Activated CD4-positive, alpha-beta T cell treated with anti-CD3 and anti-CD28 coated beads for 36 hours (primary cell): ENCODE measurements at regions of chr10 and their contacts with region 1.

Region 1: DNA sequence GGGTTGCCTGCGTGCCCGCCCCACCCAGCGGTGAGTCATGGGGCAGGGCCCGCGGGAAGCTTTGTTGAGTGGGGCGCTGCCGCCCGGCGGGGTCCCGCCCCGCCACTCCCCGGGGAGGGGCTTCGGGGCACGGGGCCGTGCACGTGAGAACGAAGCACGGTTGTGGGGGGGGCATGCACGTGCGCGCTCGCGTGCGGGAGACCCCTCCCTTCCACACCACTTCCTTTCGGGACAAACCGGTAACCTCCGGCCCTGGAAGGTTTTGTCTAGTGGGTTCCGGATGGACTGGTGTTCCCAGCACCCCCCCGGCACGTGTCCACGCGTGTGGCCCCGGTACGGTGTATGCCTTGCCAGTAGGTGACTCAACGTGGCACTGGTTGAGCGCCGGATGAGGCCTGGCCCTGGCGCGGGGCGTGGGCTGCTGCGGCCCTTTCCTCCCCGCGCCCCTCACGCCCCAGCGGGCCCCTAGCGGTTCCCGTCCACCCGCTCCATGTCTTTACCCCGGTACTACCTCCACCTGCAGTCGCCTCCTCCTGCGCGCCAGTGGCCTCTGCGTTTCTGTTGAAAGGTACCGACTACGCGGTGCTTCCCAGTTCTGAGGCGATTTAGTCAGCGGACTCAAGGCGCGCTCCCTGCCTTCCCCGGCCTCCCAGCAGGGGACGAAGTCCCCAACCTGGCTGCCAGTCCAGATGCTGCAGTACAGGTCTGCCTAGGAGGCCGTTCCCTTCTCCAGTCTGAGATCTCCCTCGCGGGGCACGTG is 3.1 kb downstream of the ADIRF start:
- DNase-seq: peak; percentile 88
- ATAC-seq: peak; percentile 78
- H3K4me3 Mint-ChIP-seq: peak overlapping the region; percentile 70
- H3K27ac Mint-ChIP-seq: peak overlapping the region; percentile 80
- H3K4me1 Mint-ChIP-seq: peaks cover 26% of the 10 kb centered on the region
- H3K27me3 Mint-ChIP-seq: peaks cover 10% of the 10 kb centered on the region

Region 2: DNA sequence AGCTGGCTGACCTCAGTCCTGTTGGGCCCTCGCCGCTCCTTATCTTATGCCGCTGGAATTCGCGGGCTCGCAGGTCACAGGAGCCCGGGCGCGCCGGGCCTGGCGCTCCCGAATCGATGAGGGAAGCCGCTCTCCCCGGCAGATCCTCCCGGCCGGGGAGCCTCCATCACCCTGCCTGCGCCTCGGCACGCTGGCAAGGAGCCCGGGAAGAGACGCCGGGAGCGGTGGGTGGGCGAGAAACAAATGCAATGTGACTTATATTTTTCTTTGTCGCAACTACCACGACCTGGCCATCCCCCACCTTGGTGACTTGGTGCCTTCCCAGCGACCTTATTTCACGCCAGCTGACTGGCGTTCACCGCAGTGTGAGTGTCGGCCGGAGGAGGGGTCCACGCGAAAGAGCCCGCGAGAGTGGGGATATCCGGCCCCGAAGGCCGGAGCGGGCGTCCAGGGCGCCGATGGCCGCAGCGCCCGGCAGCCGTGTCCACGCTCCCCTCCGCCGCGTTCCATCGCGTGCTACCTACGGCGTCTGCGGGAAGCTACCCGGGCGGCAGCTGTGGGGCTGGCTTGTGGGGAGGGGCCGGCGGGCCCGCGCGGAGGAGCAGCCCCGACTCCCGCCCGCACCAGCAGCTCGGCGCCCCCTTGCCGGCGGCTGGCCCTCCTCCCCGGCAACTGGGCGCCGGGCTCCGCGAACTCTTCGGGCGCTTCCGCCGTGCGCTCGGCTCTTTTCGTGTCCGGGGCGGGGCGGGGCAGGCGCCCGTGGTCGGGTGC is 215.5 kb before region 1 on chr10:
- CTCF ChIA-PET with region 1: no interaction called
- POLR2A ChIA-PET with region 1: no interaction called
- intact Hi-C with region 1: loop called in 1 of 2 experiments (anchors 1 kb)
- DNase-seq: peak; percentile 93
- ATAC-seq: peak; percentile 96
- H3K4me3 Mint-ChIP-seq: peak overlapping the region; percentile 85
- H3K27ac Mint-ChIP-seq: peak overlapping the region; percentile 72
- H3K4me1 Mint-ChIP-seq: peaks cover 33% of the 10 kb centered on the region
- H3K27me3 Mint-ChIP-seq: peaks cover 26% of the 10 kb centered on the region